PC-9 (cell line): ENCODE measurements at regions of chr2 and their contacts with region 1.

Region 1: DNA sequence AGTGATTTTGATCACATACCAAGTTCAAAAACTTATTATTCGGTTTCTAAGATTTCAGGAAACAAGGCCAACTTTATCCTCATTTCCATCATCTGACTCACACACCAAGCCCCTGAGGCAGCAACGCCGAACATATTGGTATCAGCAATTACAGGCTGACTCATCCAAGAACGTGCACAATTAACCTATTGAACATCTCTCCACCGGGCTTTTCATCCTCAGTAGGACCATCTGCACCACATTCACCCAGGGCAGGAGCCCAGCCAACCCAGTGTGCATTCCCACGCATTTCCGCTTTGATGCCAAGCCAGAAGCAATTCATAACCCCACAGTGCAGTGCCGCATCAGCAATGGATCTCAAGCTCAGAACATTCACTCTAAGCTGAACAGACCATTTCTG is 52.9 kb downstream of the SCG2 start:
- DNase-seq: peak; percentile 96 to 100
- H3K4me3 ChIP-seq: peak overlapping the region; percentile 8; the same call in 1 of the 2 replicates
- H3K27ac ChIP-seq: peak overlapping the region; percentile 89
- H3K4me1 ChIP-seq: peaks cover 54% of the 10 kb centered on the region
- H3K27me3 ChIP-seq: no peaks in the 10 kb centered on the region
- CTCF ChIP-seq: no peak

Region 2: GRCh38 chr2:222976521-222977076 is 572.6 kb before region 1 on chr2:
- CTCF ChIA-PET with region 1: interaction called, 6 read pairs
- POLR2A ChIA-PET with region 1: interaction called, 4 read pairs
- intact Hi-C with region 1: loop called (anchors 5 kb)
- DNase-seq: peak in 1 of 2 experiments; percentile 83
- H3K4me3 ChIP-seq: no peak overlapping the region
- H3K27ac ChIP-seq: no peak overlapping the region
- H3K4me1 ChIP-seq: peaks cover 42% of the 10 kb centered on the region
- H3K27me3 ChIP-seq: no peaks in the 10 kb centered on the region
- CTCF ChIP-seq: no peak

Region 3: DNA sequence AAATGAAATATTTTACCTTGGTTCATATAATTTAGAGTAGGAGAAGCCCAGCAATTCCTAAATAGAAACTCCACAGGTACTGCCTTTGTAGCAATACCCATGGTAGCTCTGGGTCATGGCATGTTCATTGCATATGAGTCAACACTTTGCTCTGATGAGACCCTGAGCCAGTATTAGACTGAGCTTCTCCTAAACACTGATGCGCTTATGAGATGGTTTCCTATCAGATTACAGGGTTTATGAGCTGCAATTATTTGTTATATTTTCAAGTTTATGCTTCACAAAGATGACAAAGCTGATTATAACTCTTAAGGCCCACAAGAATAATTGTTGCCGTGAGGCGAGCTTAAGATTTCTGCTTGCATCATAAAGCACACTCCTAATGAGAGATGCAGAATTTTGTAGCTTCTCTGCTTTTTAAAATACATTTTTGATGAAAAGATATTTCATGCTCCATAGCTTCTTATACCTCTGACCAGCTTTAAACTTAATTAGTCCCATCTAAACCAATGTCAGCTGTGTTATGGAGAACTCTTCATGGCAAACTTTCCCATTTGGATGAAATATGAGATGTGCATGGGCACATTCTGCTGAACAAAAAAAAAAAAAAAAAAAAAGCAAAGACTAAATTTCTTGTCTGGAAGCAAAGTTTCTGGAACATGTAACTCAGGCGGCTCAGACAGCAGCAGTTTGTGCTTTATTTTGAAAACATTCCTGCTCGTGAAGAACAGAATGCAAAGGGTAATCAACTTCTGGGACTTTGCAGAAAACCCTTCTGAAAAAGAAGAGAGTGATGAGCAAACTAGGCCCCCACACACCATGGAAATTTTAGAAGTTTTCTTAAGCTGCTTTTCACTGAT is 334.6 kb before region 1 on chr2:
- CTCF ChIA-PET with region 1: no interaction called
- POLR2A ChIA-PET with region 1: interaction called, 10 read pairs
- intact Hi-C with region 1: no loop called
- DNase-seq: no peak
- H3K4me3 ChIP-seq: no peak overlapping the region
- H3K27ac ChIP-seq: no peak overlapping the region
- H3K4me1 ChIP-seq: peaks cover 15% of the 10 kb centered on the region
- H3K27me3 ChIP-seq: no peaks in the 10 kb centered on the region
- CTCF ChIP-seq: no peak

Region 4: DNA sequence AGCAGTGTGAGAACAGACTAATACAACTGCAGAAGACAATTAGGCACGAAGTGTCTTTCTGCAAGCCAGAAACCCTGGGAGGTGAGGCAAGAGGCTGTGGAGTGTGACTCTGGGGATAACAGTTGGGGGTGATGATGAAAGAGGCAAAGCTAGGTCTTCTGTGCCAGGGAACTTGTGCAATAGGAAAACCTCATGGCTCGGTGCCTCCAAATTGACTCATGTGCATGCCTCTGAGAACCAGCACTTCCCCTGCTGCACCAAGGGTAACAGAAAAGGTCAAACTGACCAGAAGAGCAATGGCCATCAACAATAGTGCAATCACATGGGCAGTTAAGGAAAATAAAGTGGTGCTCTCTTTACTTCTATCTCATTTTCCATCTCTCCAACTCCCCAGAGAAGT is 83.4 kb before region 1 on chr2:
- CTCF ChIA-PET with region 1: interaction called, 5 read pairs
- POLR2A ChIA-PET with region 1: no interaction called
- intact Hi-C with region 1: loop called (anchors 2 kb)
- DNase-seq: peak; percentile 80 to 93
- H3K4me3 ChIP-seq: no peak overlapping the region
- H3K27ac ChIP-seq: peak overlapping the region; percentile 23
- H3K4me1 ChIP-seq: peaks cover 24% of the 10 kb centered on the region
- H3K27me3 ChIP-seq: no peaks in the 10 kb centered on the region
- CTCF ChIP-seq: no peak

Region 5: DNA sequence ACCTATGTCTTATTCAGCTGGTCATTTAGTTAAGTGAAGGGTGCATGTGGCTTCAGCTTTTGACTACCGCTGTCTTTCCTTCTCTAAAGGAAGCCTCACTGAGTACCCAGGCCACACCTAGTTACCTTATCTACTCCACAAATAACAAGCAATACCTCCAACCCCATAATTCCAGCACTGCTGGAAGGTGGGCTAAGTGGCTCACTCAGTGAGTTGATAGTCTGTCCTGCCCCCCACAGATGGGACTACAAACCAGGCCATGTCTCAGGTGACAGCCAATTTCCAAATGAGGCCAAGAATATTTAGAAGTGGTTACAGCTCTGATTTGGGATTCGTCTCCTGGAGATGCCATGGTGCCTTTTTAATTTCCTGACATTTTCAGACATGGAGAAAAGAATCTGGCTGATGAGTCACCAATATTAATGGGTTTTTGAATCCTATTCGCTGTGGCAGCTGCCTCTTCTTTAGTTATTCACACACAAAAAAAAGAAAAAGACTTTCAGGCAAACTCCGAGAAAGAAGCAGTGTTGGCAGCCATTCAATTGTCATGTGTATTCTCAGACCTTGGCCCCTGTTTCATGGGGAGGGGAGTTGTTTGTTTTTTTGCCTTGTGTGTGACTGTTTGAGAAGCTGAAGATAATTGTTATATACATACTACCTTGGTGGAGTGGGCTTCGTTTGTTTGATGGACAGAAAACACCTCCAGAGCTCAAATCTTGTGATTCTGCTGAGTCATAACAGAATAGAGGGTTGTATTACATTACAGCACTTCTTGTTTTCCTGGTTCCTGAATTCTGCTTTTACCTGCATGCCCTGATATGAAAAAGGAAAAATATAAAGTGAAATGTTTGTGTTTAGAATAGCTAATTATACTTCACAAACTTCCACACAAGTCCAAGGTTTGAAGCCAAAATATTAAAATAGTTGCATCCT is 11.3 kb before region 1 on chr2:
- CTCF ChIA-PET with region 1: interaction called, 13 read pairs
- POLR2A ChIA-PET with region 1: no interaction called
- intact Hi-C with region 1: loop called (anchors 1 kb)
- DNase-seq: peak; percentile 40 to 68
- H3K4me3 ChIP-seq: no peak overlapping the region
- H3K27ac ChIP-seq: peak overlapping the region; percentile 60
- H3K4me1 ChIP-seq: peaks cover 19% of the 10 kb centered on the region
- H3K27me3 ChIP-seq: no peaks in the 10 kb centered on the region
- CTCF ChIP-seq: no peak

Region 6: DNA sequence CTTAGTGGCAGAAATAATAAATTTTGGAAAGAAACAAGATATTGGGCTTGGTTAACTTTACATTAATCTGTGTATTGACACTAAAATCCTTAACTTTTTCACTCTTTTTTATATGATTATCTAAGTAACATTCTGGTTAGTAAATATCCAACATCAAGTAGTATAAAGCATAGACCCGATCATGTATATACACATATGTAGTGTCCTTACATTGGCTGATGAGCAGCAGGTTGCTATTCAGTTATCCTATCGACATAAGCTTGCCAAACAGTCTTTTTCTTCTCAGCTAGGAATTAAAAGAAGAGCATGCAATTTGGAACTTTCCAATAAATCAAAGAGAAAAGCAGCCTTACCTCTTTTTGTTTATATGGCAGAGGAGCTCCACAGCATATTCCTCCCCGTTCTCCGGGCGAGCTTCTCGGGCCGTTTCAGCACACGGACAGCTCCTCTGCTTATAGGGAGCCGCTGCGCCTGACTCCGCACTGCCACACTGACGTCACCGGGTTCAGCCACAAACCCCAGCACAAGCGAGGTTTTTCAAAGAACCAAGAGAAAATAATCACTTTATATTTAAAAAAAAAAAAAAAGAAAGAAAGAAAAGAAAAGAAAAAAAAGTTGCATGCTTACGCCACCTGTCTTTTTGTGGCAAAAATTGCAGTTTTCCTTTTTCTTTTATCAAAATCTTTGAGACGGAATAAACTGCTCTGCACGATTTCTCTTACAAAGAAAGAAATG is 52.9 kb after region 1 on chr2 and contains the start of gene SCG2:
- CTCF ChIA-PET with region 1: no interaction called
- POLR2A ChIA-PET with region 1: interaction called, 18 read pairs
- intact Hi-C with region 1: no loop called
- DNase-seq: peak; percentile 75 to 81
- H3K4me3 ChIP-seq: peak within 1 kb of the TSS; percentile 29; the same call in 1 of the 2 replicates
- H3K27ac ChIP-seq: no peak within 1 kb of the TSS
- H3K4me1 ChIP-seq: peaks cover 19% of the 10 kb centered on the region
- H3K27me3 ChIP-seq: no peaks in the 10 kb centered on the region
- CTCF ChIP-seq: peak; percentile 81
- total RNA-seq, gene SCG2: 0.48 and 0.81 TPM in 2 replicates

Region 7: GRCh38 chr2:223613017-223613950 is 64.1 kb after region 1 on chr2:
- CTCF ChIA-PET with region 1: no interaction called
- POLR2A ChIA-PET with region 1: no interaction called
- intact Hi-C with region 1: no loop called
- DNase-seq: peak; percentile 94 to 97
- H3K4me3 ChIP-seq: peak overlapping the region; percentile 53; the same call in 1 of the 2 replicates
- H3K27ac ChIP-seq: peak overlapping the region; percentile 59
- H3K4me1 ChIP-seq: peaks cover 20% of the 10 kb centered on the region
- H3K27me3 ChIP-seq: no peaks in the 10 kb centered on the region
- CTCF ChIP-seq: 0 out of 2 replicates have a peak, but pooled peaks have one; percentile 18

Region 8: DNA sequence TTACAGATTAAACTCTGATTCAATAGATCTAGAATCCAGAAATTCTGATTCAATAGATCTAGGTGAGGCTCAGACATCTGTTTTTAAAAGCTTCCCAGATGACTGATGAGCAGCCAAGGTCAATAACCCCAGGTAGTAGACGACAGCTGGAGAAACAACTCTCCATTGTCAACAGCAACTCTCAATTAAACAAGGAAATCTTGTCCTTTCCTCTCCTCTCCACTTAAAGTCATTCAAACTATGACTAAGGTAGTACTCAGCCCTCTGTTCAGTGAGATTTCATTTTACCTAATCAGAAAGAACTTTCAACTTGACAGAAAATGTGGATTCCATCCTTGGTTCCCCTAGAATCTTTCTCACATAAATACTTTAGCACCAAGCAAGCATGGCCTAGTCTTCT is 147.5 kb after region 1 on chr2:
- CTCF ChIA-PET with region 1: no interaction called
- POLR2A ChIA-PET with region 1: no interaction called
- intact Hi-C with region 1: no loop called
- DNase-seq: peak; percentile 26 to 84
- H3K4me3 ChIP-seq: no peak overlapping the region
- H3K27ac ChIP-seq: peak overlapping the region; percentile 70
- H3K4me1 ChIP-seq: peaks cover 33% of the 10 kb centered on the region
- H3K27me3 ChIP-seq: no peaks in the 10 kb centered on the region
- CTCF ChIP-seq: no peak

Region 9: DNA sequence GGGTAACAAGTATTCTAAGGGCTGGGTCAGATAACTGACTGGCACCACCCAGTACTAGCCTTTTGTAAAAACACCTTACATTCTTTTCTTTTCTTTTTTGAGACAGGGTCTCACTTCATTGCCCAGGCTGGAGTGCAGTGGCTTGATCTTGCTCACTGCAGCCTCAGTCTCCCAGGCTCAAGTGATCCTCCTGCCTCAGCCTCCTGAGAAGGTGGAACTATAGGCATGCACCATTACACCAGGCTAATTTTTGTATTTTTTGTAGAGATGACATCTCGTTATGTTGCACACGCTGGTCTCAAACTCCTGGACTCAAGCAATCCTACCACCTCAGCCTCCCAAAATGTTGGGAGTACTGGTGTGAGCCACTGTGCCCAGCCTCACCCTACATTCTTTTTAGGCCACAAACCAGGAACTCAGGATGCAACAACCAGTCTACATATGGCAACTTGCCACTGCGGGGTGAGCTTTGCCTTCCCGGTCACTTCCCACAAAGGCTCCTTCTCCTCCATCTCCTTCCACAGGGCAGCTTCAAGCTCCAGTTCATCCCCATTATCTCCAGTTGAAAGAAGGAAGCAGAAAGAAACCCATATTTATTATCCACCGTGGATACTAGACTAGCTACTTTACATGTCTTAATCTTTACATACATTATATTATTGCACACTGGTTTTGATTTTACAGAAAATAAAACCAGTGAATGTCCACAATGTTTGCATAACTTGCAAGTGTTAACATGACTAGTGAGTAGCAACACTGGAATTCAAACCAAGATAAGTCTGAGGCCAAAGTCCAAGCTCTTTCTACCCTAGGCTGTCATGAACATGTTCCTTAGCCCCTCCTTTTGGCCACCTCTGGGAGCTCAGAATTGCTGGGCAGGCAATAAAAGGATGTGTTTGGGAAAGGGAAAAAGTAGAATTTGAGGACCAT is 311.9 kb after region 1 on chr2:
- CTCF ChIA-PET with region 1: no interaction called
- POLR2A ChIA-PET with region 1: no interaction called
- intact Hi-C with region 1: loop called (anchors 10 kb)
- DNase-seq: peak; percentile 92 to 98
- H3K4me3 ChIP-seq: no peak overlapping the region; the same call in 1 of the 2 replicates
- H3K27ac ChIP-seq: peak overlapping the region; percentile 85
- H3K4me1 ChIP-seq: peaks cover 51% of the 10 kb centered on the region
- H3K27me3 ChIP-seq: no peaks in the 10 kb centered on the region
- CTCF ChIP-seq: peak; percentile 67